ENCODE measurements at regions of chr1 and their contacts with region 1.

Region 1: DNA sequence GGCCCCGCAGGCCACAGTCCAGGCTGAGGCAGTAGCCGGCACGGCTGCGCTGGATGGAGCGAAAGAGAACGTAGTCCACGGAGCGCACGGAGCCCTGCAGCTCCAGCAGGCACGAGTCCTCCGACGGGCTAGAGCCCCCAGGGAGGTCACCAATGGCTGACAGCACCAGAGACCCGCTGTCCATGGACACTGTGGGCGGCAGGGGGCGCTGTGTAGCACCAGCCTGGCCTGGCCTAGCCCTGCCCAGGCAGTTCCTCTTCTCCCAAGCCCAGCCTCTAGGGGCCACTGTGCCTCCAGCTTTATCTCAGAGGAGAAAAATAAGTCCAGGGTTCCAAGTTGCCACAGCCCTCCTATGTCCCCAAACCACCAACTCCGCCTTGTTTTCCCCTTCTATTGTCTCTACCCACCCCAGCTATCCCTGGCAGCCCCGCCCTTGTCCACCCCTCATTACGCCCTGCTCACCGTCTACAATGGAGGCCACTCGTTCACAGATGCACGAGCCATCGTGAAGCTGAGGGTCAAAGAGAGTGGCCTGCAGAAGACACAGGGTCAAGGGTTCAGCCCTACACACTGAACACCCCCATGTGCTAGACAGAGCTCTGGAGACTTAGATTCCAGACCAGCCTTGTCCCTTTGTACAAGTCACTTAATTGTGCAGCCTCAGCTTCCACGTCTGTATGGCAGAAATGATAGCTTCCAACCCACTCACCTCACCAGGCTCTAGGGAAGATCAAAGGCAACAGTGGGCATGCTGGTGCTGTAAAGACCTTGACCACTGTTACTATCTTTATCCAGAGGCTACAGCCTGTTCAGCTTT is 4.4 kb downstream of the ENTREP3 start:
- DNase-seq: peak; percentile 81
- H3K4me3 ChIP-seq: 0 out of 2 replicates have a peak overlapping the region, but pooled peaks have one; percentile 10
- H3K27ac ChIP-seq: no peak overlapping the region
- H3K27me3 ChIP-seq: no peaks in the 10 kb centered on the region
- CTCF ChIP-seq: peak; percentile 99

Region 2: DNA sequence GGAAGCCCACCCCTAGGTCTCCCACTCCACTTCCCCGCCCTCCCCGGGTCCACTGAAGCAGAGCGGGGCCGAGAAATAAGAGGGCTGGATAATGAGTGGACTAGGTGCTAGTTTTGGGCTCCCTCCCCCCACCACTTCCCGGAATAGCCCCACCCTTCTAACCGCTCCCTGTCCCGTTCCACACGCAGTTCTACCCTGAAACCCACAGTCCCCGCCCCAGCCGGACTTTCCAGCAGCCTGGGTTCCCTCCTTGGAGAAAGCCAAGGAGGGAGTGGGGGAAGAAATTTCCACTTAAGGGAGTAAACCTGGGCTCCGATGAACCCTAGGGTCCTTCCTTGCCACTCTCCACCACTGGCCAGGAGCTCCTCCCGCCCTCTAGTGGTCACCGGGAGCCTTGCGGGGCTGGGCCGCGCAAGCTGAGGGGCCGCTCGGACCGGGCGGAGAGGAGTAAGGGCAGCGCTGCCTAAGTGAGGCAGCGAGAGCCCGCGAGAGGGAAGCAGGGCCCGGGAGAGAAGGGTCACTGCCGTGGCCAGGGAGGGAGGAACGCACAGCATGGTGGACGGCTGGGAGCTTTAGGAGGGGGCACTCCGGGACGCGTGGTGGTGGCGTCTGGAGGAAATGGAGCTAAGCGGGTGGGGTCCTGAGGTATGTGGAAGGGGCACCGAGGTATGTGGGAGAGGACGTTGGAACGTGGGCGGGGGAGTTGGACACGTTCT is 57.4 kb before region 1 on chr1:
- CTCF ChIA-PET with region 1: interaction called, 20 read pairs
- POLR2A ChIA-PET with region 1: interaction called, 4 read pairs
- DNase-seq: peak; percentile 64
- H3K4me3 ChIP-seq: peak overlapping the region; percentile 64
- H3K27ac ChIP-seq: peak overlapping the region; percentile 87
- H3K27me3 ChIP-seq: no peaks in the 10 kb centered on the region
- CTCF ChIP-seq: peak; percentile 97

Region 3: DNA sequence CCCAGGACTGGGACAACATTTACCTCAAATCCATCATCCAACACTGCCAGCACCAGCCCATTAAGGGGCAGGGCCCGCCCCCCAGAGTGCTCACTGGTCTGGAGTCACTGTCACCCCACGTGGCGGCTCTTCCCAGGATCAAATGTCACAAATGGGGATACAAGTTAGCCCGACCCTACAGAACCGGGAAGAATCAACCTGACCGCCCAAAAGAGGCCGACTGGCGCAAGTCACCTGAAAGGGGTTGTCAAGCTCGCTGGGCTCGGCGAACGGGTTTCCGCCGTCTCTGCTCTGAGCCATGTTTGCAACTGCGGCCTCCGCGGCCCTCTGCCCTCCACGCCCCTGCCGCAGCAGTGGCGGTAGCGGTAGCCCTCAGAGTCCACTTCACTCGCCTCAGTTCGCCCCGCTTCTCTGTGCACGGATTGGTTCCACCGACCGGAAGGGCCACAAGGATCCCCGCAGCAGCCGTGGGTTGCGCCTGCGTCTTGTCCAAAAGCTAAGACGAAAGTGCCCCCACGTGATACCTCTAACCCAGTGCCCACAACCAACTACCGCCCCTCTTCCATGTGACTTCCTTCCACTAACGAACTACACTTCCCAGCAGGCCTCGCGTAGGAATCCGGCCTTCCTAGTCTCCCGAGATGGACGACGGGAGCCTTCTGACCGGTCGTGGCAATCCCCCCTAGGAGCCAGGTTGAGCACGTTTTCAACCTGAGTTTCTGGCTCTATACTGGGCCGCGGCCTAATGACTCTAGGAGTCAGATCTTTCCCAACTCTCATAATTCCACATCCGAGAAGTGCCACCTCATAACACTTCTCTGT is 11.2 kb after region 1 on chr1 and contains the start of gene SCAMP3:
- CTCF ChIA-PET with region 1: interaction called, 55 read pairs
- POLR2A ChIA-PET with region 1: interaction called, 18 read pairs
- DNase-seq: peak; percentile 96
- H3K4me3 ChIP-seq: peak within 1 kb of the TSS; percentile 96
- H3K27ac ChIP-seq: peak within 1 kb of the TSS; percentile 81
- H3K27me3 ChIP-seq: no peaks in the 10 kb centered on the region
- CTCF ChIP-seq: no peak
- polyA plus RNA-seq, gene SCAMP3: 104 and 115 TPM in 2 replicates

Region 4: DNA sequence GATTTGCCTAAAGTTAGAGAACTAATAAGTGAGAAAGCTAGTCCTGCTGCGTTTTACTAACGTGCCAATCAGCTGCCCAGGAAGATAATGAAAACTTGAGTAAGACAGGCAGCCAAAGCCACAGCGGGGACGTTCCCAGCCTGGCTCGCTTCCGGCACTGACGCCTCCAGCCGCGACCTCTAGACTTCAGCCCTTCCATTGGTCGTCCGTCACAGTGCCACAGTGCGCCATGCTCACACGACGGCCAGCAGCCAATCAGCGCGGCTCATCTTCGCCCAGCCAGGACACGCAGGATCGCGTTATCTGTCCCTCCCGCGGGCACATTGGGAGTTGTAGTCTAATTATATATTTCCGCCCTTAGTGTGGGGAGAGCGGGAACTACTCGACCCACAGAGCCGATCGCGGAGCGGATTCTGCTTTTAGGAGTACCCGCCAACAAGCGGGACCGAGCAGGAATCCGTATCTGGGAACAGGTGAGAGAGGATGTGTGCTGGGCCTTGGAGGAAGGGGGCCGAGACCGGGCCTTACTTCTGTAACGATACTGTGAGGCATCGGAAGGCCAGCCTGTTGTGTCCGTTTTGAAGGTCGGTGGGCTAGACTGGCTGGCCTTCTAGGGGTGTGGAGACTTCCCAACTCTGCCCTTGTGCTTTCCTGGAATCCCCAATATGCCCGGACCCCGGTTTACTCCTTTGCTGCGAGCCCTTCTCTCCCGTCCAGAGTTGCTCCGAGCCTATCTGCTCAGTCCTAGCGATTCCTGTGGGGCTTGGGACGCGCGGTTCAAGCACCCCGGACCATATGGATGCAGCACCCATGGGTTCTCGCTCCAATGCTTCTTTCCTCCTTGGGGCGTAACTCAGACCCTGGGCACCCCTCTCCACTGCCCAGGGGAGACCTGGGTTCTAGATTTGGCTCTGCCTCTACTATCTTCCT is 57.9 kb after region 1 on chr1 and contains the start of gene FDPS:
- CTCF ChIA-PET with region 1: interaction called, 46 read pairs
- POLR2A ChIA-PET with region 1: interaction called, 5 read pairs
- DNase-seq: peak; percentile 95
- H3K4me3 ChIP-seq: peak within 1 kb of the TSS; percentile 85
- H3K27ac ChIP-seq: peak within 1 kb of the TSS; percentile 91
- H3K27me3 ChIP-seq: no peaks in the 10 kb centered on the region
- CTCF ChIP-seq: no peak; the same call in 1 of the 2 replicates
- polyA plus RNA-seq, gene FDPS: 140 and 146 TPM in 2 replicates

Region 5: GRCh38 chr1:155591770-155592169 is 340.9 kb after region 1 on chr1:
- CTCF ChIA-PET with region 1: interaction called, 18 read pairs
- POLR2A ChIA-PET with region 1: no interaction called
- DNase-seq: no peak
- H3K4me3 ChIP-seq: no peak overlapping the region
- H3K27ac ChIP-seq: no peak overlapping the region
- H3K27me3 ChIP-seq: no peaks in the 10 kb centered on the region
- CTCF ChIP-seq: peak; percentile 55

Measured in AG04450 (cell line).